K562 (cell line): ENCODE measurements at regions of chr5 and their contacts with region 1.

Region 1: DNA sequence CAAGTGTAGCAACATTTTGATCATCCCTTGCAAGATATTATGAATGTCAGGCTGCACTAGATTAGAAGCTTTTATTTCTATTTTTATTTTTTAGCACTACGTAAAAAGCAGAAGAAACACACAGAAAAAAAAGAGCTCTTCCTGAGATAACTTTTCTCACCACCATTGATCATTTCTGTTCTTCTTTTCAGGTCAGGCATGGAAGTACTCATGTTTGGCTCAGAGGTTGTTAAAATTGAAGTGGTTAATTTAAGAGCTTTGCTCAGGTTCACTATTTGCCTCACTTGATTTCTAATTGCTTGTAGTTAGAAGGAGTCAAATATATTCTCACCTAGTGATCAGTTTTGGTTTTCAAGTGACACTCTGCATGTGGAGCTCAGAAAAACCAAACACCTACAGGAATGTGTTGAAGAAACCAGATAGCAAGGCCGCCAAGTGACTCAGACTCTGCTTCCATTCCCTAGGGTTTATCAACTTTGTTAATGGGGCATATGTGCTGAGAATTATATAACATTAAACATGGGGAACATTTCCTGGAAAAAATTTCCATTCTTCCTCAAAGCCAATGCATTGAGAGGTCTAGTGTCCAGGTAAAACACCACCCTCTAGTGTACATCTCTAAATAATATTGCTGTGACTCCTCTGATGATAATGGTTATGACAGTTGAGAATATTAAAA is 679.8 kb downstream of the CETN3 start:
- DNase-seq: peak in 2 of 4 experiments; percentile 4 to 5
- ATAC-seq: 0 out of 3 replicates have a peak, but pooled peaks have one; percentile 44
- H3K4me3 ChIP-seq: no peak overlapping the region
- H3K27ac ChIP-seq: no peak overlapping the region
- H3K4me1 ChIP-seq: no peaks in the 10 kb centered on the region
- H3K27me3 ChIP-seq: no peaks in the 10 kb centered on the region
- CTCF ChIP-seq: peak in 1 of 3 experiments; percentile 36; a peak in 2 of 6 replicates
- EP300 ChIP-seq: no peak
- POLR2A ChIP-seq: no peak
- RAD21 ChIP-seq: peak; percentile 65 to 77

Region 2: GRCh38 chr5:89268460-89268859 is 461.3 kb before region 1 on chr5:
- CTCF ChIA-PET with region 1: no interaction called
- POLR2A ChIA-PET with region 1: no interaction called
- in situ Hi-C with region 1: no loop called
- intact Hi-C with region 1: loop called (anchors 10 kb)
- DNase-seq: no peak
- ATAC-seq: no peak
- H3K4me3 ChIP-seq: no peak overlapping the region
- H3K27ac ChIP-seq: no peak overlapping the region
- H3K4me1 ChIP-seq: peaks cover 0 to 10% of the 10 kb centered on the region in 2 experiments; a peak in 3 of 5 replicates
- H3K27me3 ChIP-seq: no peaks in the 10 kb centered on the region
- CTCF ChIP-seq: no peak
- EP300 ChIP-seq: no peak
- POLR2A ChIP-seq: no peak
- RAD21 ChIP-seq: no peak

Region 3: GRCh38 chr5:90248640-90249039 is 518.9 kb after region 1 on chr5:
- CTCF ChIA-PET with region 1: no interaction called
- POLR2A ChIA-PET with region 1: no interaction called
- in situ Hi-C with region 1: no loop called
- intact Hi-C with region 1: no loop called
- DNase-seq: no peak
- ATAC-seq: no peak
- H3K4me3 ChIP-seq: no peak overlapping the region
- H3K27ac ChIP-seq: no peak overlapping the region
- H3K4me1 ChIP-seq: no peaks in the 10 kb centered on the region
- H3K27me3 ChIP-seq: no peaks in the 10 kb centered on the region
- CTCF ChIP-seq: no peak
- EP300 ChIP-seq: no peak
- POLR2A ChIP-seq: no peak
- RAD21 ChIP-seq: no peak